ENCODE measurements at regions of chr6 and their contacts with region 1.

Region 1: DNA sequence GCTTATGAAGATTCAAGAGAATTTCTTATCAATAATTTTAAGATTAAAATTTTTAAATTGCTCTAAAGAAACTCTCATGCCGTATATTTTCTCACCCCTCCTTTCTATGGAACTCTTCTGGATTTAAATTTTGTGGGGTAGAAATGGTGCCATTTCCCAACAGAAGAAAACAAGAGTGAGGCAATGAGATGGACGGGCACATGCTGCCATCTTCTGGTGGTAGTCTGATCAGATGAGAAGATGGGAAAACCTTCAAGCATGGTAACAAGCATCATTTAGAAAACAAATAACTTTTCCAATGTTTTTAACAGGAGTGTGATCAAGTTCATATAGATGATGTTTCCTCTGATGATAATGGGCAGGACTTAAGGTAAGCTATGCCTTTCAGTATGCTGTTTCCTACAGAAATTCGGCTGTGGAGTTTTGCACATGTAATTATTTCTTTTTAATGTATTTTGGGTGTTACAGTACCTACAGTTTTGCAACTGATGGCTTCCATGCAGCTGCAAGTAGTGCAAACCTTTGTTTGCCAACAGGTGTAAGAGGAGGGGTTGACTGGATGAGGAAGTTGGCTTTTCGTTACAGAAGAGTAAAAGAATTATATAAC is 271.4 kb downstream of the EYA4 start:
- DNase-seq: peak; percentile 46
- H3K4me3 Mint-ChIP-seq: no peak overlapping the region
- H3K27ac Mint-ChIP-seq: no peak overlapping the region
- H3K4me1 Mint-ChIP-seq: no peaks in the 10 kb centered on the region
- H3K27me3 Mint-ChIP-seq: no peaks in the 10 kb centered on the region

Region 2: DNA sequence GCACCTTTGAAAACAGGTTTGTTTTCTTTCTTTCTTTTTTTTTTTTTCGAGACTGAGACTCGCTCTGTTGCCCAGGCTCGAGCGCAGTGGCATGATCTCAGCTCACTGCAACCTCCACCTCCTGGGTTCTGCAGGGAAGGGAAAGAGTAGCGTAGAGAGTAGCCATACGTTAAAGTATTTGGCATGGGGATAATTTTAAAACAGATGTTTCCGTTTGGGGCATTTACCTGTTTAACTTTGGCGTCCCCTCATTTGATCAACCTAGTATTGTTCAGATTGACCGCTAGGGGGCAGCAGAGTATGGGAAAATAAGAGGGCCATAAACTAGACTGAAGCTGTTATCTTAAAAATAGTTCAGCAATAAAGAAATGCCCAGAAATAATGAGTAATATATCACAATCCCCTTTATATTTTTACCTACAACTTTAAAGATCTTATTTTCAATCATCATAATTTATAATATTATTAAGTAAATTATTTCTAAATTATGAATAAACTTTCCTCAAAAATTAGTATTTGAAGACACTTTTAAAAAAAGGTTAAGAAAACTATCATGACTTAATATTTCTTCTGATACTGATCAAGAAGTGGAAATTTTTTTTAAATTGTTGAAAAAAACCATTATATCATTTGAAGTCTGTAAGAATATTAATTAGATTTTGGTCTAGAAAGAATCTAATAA is 982.1 kb before region 1 on chr6:
- CTCF ChIA-PET with region 1: no interaction called
- POLR2A ChIA-PET with region 1: no interaction called
- intact Hi-C with region 1: loop called (anchors 2 kb)
- DNase-seq: peak; percentile 69
- H3K4me3 Mint-ChIP-seq: no peak overlapping the region
- H3K27ac Mint-ChIP-seq: no peak overlapping the region
- H3K4me1 Mint-ChIP-seq: no peaks in the 10 kb centered on the region
- H3K27me3 Mint-ChIP-seq: peaks cover 7% of the 10 kb centered on the region

Region 3: GRCh38 chr6:132820629-132821381 is 691.7 kb before region 1 on chr6:
- CTCF ChIA-PET with region 1: no interaction called
- POLR2A ChIA-PET with region 1: no interaction called
- intact Hi-C with region 1: loop called (anchors 2 kb)
- DNase-seq: no peak
- H3K4me3 Mint-ChIP-seq: no peak overlapping the region
- H3K27ac Mint-ChIP-seq: peak overlapping the region; percentile 64
- H3K4me1 Mint-ChIP-seq: peaks cover 50% of the 10 kb centered on the region
- H3K27me3 Mint-ChIP-seq: no peaks in the 10 kb centered on the region

Region 4: GRCh38 chr6:133184798-133185372 is 327.6 kb before region 1 on chr6:
- CTCF ChIA-PET with region 1: no interaction called
- POLR2A ChIA-PET with region 1: no interaction called
- intact Hi-C with region 1: loop called (anchors 5 kb)
- DNase-seq: no peak
- H3K4me3 Mint-ChIP-seq: no peak overlapping the region
- H3K27ac Mint-ChIP-seq: no peak overlapping the region
- H3K4me1 Mint-ChIP-seq: no peaks in the 10 kb centered on the region
- H3K27me3 Mint-ChIP-seq: peaks cover 1% of the 10 kb centered on the region

Region 5: GRCh38 chr6:133682506-133683307 is 170.2 kb after region 1 on chr6:
- CTCF ChIA-PET with region 1: no interaction called
- POLR2A ChIA-PET with region 1: no interaction called
- intact Hi-C with region 1: no loop called
- DNase-seq: no peak
- H3K4me3 Mint-ChIP-seq: no peak overlapping the region
- H3K27ac Mint-ChIP-seq: no peak overlapping the region
- H3K4me1 Mint-ChIP-seq: no peaks in the 10 kb centered on the region
- H3K27me3 Mint-ChIP-seq: no peaks in the 10 kb centered on the region